Heart right ventricle (tissue), 16 donors: ENCODE measurements at regions of chr22 and their contacts with region 1.

Region 1: DNA sequence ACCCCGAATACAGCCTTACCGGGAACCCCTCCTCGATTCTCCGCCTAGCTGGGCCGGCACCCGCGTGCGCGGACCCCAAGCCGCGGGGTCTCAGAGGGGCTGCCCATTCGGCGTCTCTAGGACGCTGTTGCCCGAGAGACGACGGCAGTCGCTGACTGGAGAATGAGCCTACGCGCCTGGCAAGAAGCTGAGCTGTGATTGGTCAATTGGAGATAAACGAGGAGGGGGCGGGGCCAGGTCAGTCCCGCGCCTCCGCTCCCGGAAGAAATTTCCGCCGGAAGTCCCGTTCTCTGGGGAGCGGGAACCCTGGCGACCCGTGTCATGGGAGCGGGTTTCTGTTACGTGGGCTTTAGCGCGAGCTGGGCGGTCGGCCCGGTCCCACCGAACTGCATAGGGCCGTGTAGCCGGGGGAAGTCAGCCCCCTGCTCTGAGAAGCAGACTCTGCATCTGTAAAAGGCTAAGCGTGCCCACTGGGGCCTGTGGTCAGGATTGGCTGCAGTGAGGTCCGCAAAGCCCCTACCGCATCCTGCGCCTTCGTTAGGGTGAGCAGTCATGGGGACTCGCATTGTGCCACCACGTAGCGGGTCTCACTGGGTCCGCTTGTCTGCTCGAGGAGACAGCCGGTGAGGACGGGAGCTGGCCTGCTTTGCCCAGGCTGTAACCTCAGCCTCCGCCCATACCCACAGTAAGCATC is at the start of gene EFCAB6:
- DNase-seq: peak; percentile 91 to 95
- ATAC-seq: peak; percentile 97 to 99 (median 98)
- H3K4me3 ChIP-seq: peak within 1 kb of the TSS; percentile 56 to 99 (median 84)
- H3K27ac ChIP-seq: peak within 1 kb of the TSS; percentile 54 to 94 (median 82)
- H3K4me1 ChIP-seq: peaks cover 5 to 21% (median 16%) of the 10 kb centered on the region in 9 donors
- H3K27me3 ChIP-seq: no peaks in the 10 kb centered on the region
- CTCF ChIP-seq: no peak
- total RNA-seq, gene EFCAB6: 1.0 to 4.3 (median 1.9) TPM

Region 2: DNA sequence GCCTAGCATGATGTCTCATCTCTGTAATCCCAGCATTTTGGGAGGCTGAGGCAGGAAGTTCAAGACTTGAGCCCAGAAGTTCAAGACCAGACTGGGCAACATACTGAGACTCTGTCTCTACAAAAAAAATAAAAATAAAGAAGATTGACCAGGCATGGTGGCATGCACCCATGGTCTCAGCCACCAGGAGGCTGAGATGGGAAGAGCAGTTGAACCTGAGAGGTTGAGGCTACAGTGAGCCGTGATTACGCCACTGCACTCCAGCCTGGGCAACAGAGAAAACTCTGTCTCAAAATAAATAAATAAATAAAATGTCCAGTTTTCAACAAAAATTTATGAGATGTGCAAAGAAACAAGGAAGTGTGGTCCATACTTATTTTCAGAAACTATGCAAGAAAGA is 28.5 kb before region 1 on chr22:
- intact Hi-C with region 1: no loop called
- DNase-seq: no peak
- ATAC-seq: no peak
- H3K4me3 ChIP-seq: no peak overlapping the region
- H3K27ac ChIP-seq: no peak overlapping the region
- H3K4me1 ChIP-seq: no peaks in the 10 kb centered on the region
- H3K27me3 ChIP-seq: no peaks in the 10 kb centered on the region
- CTCF ChIP-seq: peak in 1 of 9 donors; percentile 12

Region 3: GRCh38 chr22:43955040-43955882 is 143.0 kb after region 1 on chr22 and contains the start of gene SAMM50:
- intact Hi-C with region 1: loop called in 1 of 10 experiments (anchors 10 kb)
- DNase-seq: peak; percentile 93
- ATAC-seq: peak; percentile 96 to 99 (median 99)
- H3K4me3 ChIP-seq: peak within 1 kb of the TSS; percentile 71 to 98 (median 92)
- H3K27ac ChIP-seq: peak within 1 kb of the TSS; percentile 61 to 95 (median 90)
- H3K4me1 ChIP-seq: peaks cover 11 to 37% (median 35%) of the 10 kb centered on the region in 9 donors
- H3K27me3 ChIP-seq: peaks cover 0 to 10% (median 0%) of the 10 kb centered on the region in 7 donors
- CTCF ChIP-seq: peak in 3 of 9 donors; percentile 12 to 22 (median 12)
- total RNA-seq, gene SAMM50: 58.1 to 90.6 (median 74.1) TPM